ENCODE measurements at regions of chr18 and their contacts with region 1.

Region 1: GRCh38 chr18:48834413-48835031 is 116.2 kb downstream of the SMAD7 start:
- DNase-seq: peak; percentile 60
- ATAC-seq: peak; percentile 66
- H3K4me3 ChIP-seq: peak overlapping the region in 3 of 5 experiments; percentile 2 to 37 (median 29)
- H3K4me3 Mint-ChIP-seq: peak overlapping the region; percentile 83
- H3K27ac ChIP-seq: peak overlapping the region in 1 of 2 donors; percentile 32
- H3K27ac Mint-ChIP-seq: peak overlapping the region; percentile 74
- H3K4me1 ChIP-seq: peaks cover 32 to 36% of the 10 kb centered on the region in 2 donors
- H3K4me1 Mint-ChIP-seq: peaks cover 41% of the 10 kb centered on the region
- H3K27me3 ChIP-seq: peaks cover 0 to 3% (median 0%) of the 10 kb centered on the region in 4 experiments
- H3K27me3 Mint-ChIP-seq: no peaks in the 10 kb centered on the region
- CTCF ChIP-seq: no peak

Region 2: GRCh38 chr18:48820483-48821250 is 13.9 kb before region 1 on chr18:
- CTCF ChIA-PET with region 1: no interaction called
- POLR2A ChIA-PET with region 1: interaction called, 11 read pairs
- intact Hi-C with region 1: loop called (anchors 2 kb)
- DNase-seq: peak; percentile 66
- ATAC-seq: peak; percentile 95
- H3K4me3 ChIP-seq: no peak overlapping the region
- H3K4me3 Mint-ChIP-seq: peak overlapping the region; percentile 40
- H3K27ac ChIP-seq: no peak overlapping the region
- H3K27ac Mint-ChIP-seq: peak overlapping the region; percentile 27
- H3K4me1 ChIP-seq: peaks cover 12 to 15% of the 10 kb centered on the region in 2 donors
- H3K4me1 Mint-ChIP-seq: peaks cover 21% of the 10 kb centered on the region
- H3K27me3 ChIP-seq: no peaks in the 10 kb centered on the region
- H3K27me3 Mint-ChIP-seq: no peaks in the 10 kb centered on the region
- CTCF ChIP-seq: no peak

Region 3: GRCh38 chr18:48868468-48869466 is 34.2 kb after region 1 on chr18:
- CTCF ChIA-PET with region 1: no interaction called
- POLR2A ChIA-PET with region 1: interaction called, 5 read pairs
- intact Hi-C with region 1: loop called (anchors 1 kb)
- DNase-seq: peak; percentile 94
- ATAC-seq: peak; percentile 94
- H3K4me3 ChIP-seq: no peak overlapping the region
- H3K4me3 Mint-ChIP-seq: peak overlapping the region; percentile 51
- H3K27ac ChIP-seq: peak overlapping the region; percentile 67 to 78
- H3K27ac Mint-ChIP-seq: peak overlapping the region; percentile 94
- H3K4me1 ChIP-seq: peaks cover 17 to 26% of the 10 kb centered on the region in 2 donors
- H3K4me1 Mint-ChIP-seq: peaks cover 17% of the 10 kb centered on the region
- H3K27me3 ChIP-seq: no peaks in the 10 kb centered on the region
- H3K27me3 Mint-ChIP-seq: no peaks in the 10 kb centered on the region
- CTCF ChIP-seq: no peak

Region 4: GRCh38 chr18:48975649-48976204 is 141.2 kb after region 1 on chr18:
- CTCF ChIA-PET with region 1: no interaction called
- POLR2A ChIA-PET with region 1: no interaction called
- intact Hi-C with region 1: no loop called
- DNase-seq: peak; percentile 63
- ATAC-seq: peak; percentile 75
- H3K4me3 ChIP-seq: peak overlapping the region in 4 of 5 experiments; percentile 33 to 71 (median 54)
- H3K4me3 Mint-ChIP-seq: peak overlapping the region; percentile 86
- H3K27ac ChIP-seq: no peak overlapping the region
- H3K27ac Mint-ChIP-seq: no peak overlapping the region
- H3K4me1 ChIP-seq: peaks cover 14 to 16% of the 10 kb centered on the region in 2 donors
- H3K4me1 Mint-ChIP-seq: peaks cover 13% of the 10 kb centered on the region
- H3K27me3 ChIP-seq: peaks cover 0 to 36% (median 12%) of the 10 kb centered on the region in 4 experiments
- H3K27me3 Mint-ChIP-seq: peaks cover 29% of the 10 kb centered on the region
- CTCF ChIP-seq: no peak

Measured in B cell (primary cell).